ENCODE measurements at regions of chr2 and their contacts with region 1.

Region 1: DNA sequence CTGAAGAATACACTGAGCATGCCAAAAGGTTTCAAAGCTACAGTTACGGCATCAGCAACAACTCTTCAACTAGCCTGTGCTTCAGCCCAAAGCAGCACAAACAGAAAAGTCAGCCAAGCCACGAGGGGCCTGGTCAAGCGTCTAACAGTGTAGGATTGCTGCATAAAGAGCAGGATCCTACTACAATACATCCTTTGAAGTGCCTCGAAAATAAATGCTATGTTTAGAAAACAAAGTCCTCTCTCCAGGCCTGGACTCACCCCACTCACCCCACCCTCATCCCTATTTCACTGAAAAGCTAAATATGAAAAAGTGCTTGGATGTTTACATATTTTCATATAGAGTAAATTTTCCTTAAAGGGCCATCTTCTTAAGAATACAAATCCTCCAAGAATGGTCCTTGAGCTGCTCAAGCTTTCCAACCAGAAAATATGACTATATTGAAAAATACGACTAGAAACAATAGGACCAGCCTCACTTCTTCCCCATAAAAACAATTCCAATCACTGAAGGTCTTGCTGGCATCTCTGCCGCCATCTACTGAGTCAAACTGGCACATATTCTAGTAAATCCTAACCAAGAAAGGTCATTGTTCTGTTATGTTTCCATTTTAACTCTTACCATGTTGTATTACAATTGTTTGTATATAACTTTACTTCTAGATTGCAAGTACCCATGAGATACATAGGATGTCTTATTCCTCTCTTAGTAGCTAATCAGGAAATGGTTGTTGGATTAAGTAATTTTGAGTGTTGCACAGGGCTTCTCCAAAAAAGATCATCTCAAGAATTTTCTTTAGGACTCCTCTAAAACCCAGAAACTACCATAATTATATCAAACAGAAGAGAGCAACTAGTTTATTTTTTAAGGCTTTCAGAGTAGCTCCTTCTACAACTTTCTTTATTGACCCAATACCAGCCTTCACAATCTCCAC is 63.6 kb downstream of the CLHC1 start:
- H3K4me3 Mint-ChIP-seq: no peak overlapping the region
- H3K27ac Mint-ChIP-seq: no peak overlapping the region
- H3K4me1 Mint-ChIP-seq: peaks cover 21% of the 10 kb centered on the region
- H3K27me3 Mint-ChIP-seq: no peaks in the 10 kb centered on the region

Region 2: DNA sequence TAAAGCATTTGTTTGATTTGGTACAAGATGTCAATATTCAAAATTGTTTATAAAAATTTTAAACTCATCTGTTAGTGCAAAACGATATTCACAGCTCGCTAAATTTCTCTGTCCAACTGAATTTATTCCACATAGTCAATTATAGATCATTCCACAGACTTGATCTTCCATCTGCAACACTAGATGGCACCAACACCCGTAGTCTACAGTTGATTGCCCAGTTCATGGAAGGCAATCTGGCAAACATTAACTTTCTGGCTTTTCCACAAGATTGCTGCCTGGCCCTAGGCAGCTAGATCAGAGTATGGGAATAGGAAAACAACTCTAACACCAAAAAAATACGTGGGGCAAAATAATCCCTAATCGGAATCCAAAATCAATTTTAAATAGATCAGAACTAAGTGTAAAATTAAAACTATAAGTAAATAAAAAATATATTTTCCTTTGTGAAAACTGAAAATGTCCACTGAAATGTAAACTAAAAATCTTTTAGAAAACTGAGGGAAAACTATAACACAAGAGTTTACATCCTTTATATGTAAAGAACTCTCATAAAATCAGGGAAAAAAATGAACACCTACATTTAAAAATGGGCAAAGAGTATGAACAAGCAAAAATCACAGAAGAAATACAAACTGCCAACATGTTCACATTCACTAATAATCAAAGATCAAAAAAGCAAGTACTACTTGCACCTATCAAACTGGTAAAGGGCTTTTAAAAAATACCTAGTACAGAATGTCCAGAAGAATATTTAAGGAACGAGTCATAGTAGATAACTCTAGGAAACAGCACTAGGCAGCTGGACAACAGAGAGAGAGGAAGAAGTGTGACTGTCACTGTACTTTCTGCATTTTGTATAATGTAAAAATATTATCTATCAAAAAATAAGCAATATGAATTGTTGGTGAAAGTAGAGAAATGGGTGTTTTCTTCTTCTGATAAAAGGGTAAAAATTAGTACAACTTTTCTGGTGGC is 153.2 kb before region 1 on chr2:
- intact Hi-C with region 1: loop called (anchors 1 kb)
- H3K4me3 Mint-ChIP-seq: no peak overlapping the region
- H3K27ac Mint-ChIP-seq: no peak overlapping the region
- H3K4me1 Mint-ChIP-seq: peaks cover 60% of the 10 kb centered on the region
- H3K27me3 Mint-ChIP-seq: no peaks in the 10 kb centered on the region

Region 3: GRCh38 chr2:55063713-55064323 is 104.7 kb before region 1 on chr2:
- intact Hi-C with region 1: loop called (anchors 5 kb)
- H3K4me3 Mint-ChIP-seq: no peak overlapping the region
- H3K27ac Mint-ChIP-seq: peak overlapping the region; percentile 20
- H3K4me1 Mint-ChIP-seq: peaks cover 25% of the 10 kb centered on the region
- H3K27me3 Mint-ChIP-seq: no peaks in the 10 kb centered on the region

Region 4: DNA sequence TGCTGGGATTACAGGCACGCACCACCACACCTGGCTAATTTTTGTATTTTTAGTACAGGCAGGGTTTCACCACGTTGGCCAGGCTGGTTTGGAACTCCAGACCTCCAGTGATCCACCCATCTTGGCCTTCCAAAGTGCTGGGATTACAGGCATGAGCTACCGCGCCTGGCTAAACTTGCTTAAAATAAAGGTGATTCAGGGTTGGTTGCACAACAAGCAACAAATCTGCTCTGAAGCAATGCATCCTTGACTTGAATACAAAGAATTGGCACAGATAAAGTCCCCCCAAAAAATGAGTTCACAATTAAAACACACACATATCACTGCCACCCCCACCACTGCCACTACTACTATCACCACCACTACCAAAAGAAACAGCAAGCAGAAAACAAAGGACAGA is 216.3 kb after region 1 on chr2:
- intact Hi-C with region 1: no loop called
- H3K4me3 Mint-ChIP-seq: no peak overlapping the region
- H3K27ac Mint-ChIP-seq: no peak overlapping the region
- H3K4me1 Mint-ChIP-seq: peaks cover 7% of the 10 kb centered on the region
- H3K27me3 Mint-ChIP-seq: no peaks in the 10 kb centered on the region

Measured in dendritic cell treated with granulocyte-macrophage colony-stimulating factor and Interleukin-4, amounts not matched to agents 40 ng/mL and 50 ng/mL, for 4 days (primary cell).